ENCODE measurements at regions of chr4 and their contacts with region 1.

Region 1: GRCh38 chr4:55018521-55018920 is 106.9 kb downstream of the KDR start:
- DNase-seq: no peak
- H3K4me3 Mint-ChIP-seq: no peak overlapping the region
- H3K27ac Mint-ChIP-seq: peak overlapping the region; percentile 66
- H3K4me1 Mint-ChIP-seq: peaks cover 32% of the 10 kb centered on the region
- H3K27me3 Mint-ChIP-seq: no peaks in the 10 kb centered on the region
- CTCF ChIP-seq: no peak

Region 2: GRCh38 chr4:54945838-54946237 is 72.7 kb before region 1 on chr4:
- CTCF ChIA-PET with region 1: no interaction called
- POLR2A ChIA-PET with region 1: no interaction called
- intact Hi-C with region 1: no loop called
- DNase-seq: no peak
- H3K4me3 Mint-ChIP-seq: no peak overlapping the region
- H3K27ac Mint-ChIP-seq: no peak overlapping the region
- H3K4me1 Mint-ChIP-seq: no peaks in the 10 kb centered on the region
- H3K27me3 Mint-ChIP-seq: no peaks in the 10 kb centered on the region
- CTCF ChIP-seq: no peak

Region 3: GRCh38 chr4:55032788-55033187 is 14.3 kb after region 1 on chr4:
- CTCF ChIA-PET with region 1: interaction called, 4 read pairs
- POLR2A ChIA-PET with region 1: interaction called, 77 read pairs
- intact Hi-C with region 1: no loop called
- DNase-seq: no peak
- H3K4me3 Mint-ChIP-seq: no peak overlapping the region
- H3K27ac Mint-ChIP-seq: peak overlapping the region; percentile 49
- H3K4me1 Mint-ChIP-seq: peaks cover 71% of the 10 kb centered on the region
- H3K27me3 Mint-ChIP-seq: no peaks in the 10 kb centered on the region
- CTCF ChIP-seq: no peak

Region 4: DNA sequence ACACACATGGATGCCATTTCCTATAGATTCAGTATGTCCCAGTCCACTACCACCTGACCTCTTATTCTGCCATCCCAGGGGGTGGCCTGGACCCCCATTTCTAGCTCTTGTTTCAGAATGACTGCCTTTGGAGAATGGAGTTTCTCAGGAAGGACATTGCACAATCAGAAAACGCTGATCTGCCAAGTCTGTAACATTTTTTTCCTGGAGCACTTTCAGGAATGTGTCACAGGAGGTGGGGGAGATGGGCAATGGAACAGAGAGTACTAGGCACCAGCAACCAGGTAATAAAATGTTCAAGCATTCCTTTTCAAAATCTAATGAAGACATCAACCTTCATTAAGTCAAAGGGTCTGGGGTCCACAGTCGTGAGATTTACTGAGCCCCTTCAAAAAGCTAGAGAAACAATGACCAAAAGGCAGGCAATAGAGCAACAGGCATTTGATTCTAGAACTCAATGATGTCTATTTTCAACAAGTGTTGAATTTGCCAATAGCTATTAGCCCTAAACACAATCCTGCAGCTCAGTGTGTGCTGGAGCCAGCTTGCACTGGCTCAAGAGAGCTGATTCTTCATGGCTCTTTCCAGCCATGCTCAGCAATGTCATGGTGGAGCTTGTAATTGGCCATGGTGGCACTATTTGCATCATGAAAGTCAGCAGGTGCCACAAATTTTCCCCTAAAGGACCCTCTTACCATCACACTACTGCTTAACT is 19.8 kb after region 1 on chr4:
- CTCF ChIA-PET with region 1: interaction called, 4 read pairs
- POLR2A ChIA-PET with region 1: interaction called, 77 read pairs
- intact Hi-C with region 1: no loop called
- DNase-seq: peak; percentile 77
- H3K4me3 Mint-ChIP-seq: peak overlapping the region; percentile 59
- H3K27ac Mint-ChIP-seq: peak overlapping the region; percentile 73
- H3K4me1 Mint-ChIP-seq: peaks cover 59% of the 10 kb centered on the region
- H3K27me3 Mint-ChIP-seq: no peaks in the 10 kb centered on the region
- CTCF ChIP-seq: no peak